Activated CD4-positive, alpha-beta T cell treated with anti-CD3 and anti-CD28 coated beads, Interleukin-2, amount 10 ng/mL, durations not matched to agents 24 days and 14 days (primary cell): ENCODE measurements at regions of chr22 and their contacts with region 1.

Region 1: GRCh38 chr22:46613606-46614021 is 6.6 kb upstream of the GRAMD4 start:
- DNase-seq: peak; percentile 66
- H3K4me3 Mint-ChIP-seq: peak overlapping the region; percentile 85
- H3K27ac Mint-ChIP-seq: peak overlapping the region; percentile 93
- H3K4me1 Mint-ChIP-seq: peaks cover 35% of the 10 kb centered on the region
- H3K27me3 Mint-ChIP-seq: no peaks in the 10 kb centered on the region

Region 2: GRCh38 chr22:46576556-46577367 is 36.9 kb before region 1 on chr22:
- intact Hi-C with region 1: loop called (anchors 5 kb)
- DNase-seq: peak; percentile 90
- H3K4me3 Mint-ChIP-seq: peak overlapping the region; percentile 83
- H3K27ac Mint-ChIP-seq: no peak overlapping the region
- H3K4me1 Mint-ChIP-seq: peaks cover 44% of the 10 kb centered on the region
- H3K27me3 Mint-ChIP-seq: no peaks in the 10 kb centered on the region

Region 3: DNA sequence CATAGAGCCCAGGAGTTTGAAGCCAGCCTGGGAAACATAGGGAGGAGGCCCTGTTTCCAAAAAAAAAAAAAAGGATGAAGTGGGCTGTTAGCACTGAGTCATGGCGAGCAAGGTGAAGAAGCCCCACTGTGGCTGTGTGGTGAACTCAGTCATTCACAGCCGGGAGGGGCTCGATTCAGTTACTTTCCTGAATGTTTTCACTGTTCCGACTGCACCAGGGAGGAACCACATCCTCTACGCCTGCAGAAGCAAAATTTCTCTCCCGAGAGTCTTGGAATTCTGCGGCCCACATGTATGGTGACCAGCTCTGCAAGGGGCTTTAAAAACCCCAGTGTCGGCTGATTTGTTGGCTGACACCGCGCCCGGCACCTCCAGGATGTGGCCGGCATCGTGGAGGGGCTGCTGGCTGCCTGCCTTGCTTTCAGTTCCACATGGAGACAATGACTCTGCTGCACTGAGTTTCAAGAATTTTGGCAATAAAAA is 21.2 kb before region 1 on chr22:
- intact Hi-C with region 1: loop called (anchors 1 kb)
- DNase-seq: peak; percentile 88
- H3K4me3 Mint-ChIP-seq: peak overlapping the region; percentile 77
- H3K27ac Mint-ChIP-seq: peak overlapping the region; percentile 88
- H3K4me1 Mint-ChIP-seq: peaks cover 33% of the 10 kb centered on the region
- H3K27me3 Mint-ChIP-seq: no peaks in the 10 kb centered on the region

Region 4: GRCh38 chr22:46638601-46639431 is 25.2 kb after region 1 on chr22:
- intact Hi-C with region 1: no loop called
- DNase-seq: no peak
- H3K4me3 Mint-ChIP-seq: no peak overlapping the region
- H3K27ac Mint-ChIP-seq: no peak overlapping the region
- H3K4me1 Mint-ChIP-seq: peaks cover 4% of the 10 kb centered on the region
- H3K27me3 Mint-ChIP-seq: no peaks in the 10 kb centered on the region

Region 5: DNA sequence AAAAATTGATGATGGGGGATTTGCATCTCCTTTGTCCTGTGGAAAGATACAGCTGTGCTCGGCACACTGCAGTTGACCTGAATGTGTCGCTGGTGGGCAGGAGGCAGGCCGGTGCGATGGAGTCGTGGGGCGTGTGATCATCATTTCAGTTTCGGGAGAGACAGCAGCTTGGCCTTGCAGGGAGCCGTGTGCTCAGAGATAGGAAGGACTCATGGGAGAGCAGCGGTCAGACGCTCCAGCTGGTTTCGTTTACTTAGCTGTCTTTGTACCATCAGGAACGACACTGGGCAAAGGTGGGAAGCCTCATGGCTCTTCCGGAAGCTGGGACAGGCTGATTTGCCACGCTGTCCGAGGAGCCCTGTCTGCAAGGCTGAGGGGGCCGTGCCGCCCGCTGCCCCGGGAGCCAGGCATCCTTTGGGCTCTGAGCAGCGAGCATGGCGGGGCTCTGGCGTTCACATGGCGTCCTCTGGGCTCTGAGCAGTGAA is 39.3 kb after region 1 on chr22:
- intact Hi-C with region 1: loop called (anchors 1 kb)
- DNase-seq: no peak
- H3K4me3 Mint-ChIP-seq: peak overlapping the region; percentile 25
- H3K27ac Mint-ChIP-seq: peak overlapping the region; percentile 94
- H3K4me1 Mint-ChIP-seq: peaks cover 34% of the 10 kb centered on the region
- H3K27me3 Mint-ChIP-seq: no peaks in the 10 kb centered on the region